Aorta (tissue), 5 donors: ENCODE measurements at regions of chr14 and their contacts with region 1.

Region 1: DNA sequence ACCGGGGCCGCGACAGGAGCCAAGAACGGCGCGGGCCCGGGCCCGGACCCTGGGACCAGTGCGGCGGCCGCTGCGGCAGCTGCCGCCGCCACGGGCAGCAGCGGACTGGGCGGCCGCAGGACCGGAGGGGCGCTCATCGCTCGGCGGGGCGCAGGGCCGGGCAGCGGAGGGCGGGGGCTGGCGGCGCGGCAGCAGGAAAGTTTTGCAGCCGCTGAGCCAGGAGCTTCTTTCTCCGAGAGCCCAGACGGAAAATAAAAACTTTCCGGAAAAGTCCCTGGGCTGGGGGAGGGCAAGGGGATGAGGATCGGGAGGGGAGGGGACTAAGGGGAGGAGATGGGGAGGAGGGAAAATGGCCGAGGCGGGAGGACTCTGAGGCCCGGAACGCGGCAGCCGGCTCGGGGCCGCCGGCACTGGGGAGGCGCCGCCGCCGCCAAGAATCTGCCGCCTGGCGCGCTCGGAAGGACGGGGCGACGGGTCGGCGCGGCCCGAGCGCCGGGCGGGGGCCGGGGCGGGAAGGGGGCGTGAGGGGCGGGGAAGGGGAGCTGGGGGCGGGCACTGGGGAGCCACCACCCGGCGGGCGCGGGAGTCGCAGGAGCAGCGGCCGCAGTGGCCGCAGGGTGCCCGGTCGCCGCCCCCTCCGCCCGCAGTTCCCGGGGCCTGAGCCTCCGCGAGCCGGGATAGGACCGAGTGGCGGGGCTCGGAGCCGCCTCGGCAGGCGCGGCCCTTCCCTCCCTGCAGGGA is at the start of gene PRKD1:
- DNase-seq: peak; percentile 70 to 90
- ATAC-seq: peak; percentile 90
- H3K4me3 ChIP-seq: peak within 1 kb of the TSS; percentile 95 to 99
- H3K27ac ChIP-seq: peak within 1 kb of the TSS; percentile 85 to 94
- H3K4me1 ChIP-seq: peaks cover 5 to 6% of the 10 kb centered on the region in 2 donors
- H3K27me3 ChIP-seq: no peaks in the 10 kb centered on the region
- total RNA-seq, gene PRKD1: 24.8 to 27.9 TPM

Region 2: GRCh38 chr14:29724991-29725390 is 202.6 kb before region 1 on chr14:
- intact Hi-C with region 1: loop called in 1 of 2 experiments (anchors 10 kb)
- DNase-seq: no peak
- ATAC-seq: peak; percentile 19
- H3K4me3 ChIP-seq: no peak overlapping the region
- H3K27ac ChIP-seq: no peak overlapping the region
- H3K4me1 ChIP-seq: peaks cover 3 to 4% of the 10 kb centered on the region in 2 donors
- H3K27me3 ChIP-seq: no peaks in the 10 kb centered on the region

Region 3: GRCh38 chr14:29741909-29742401 is 185.6 kb before region 1 on chr14:
- intact Hi-C with region 1: loop called in 1 of 2 experiments (anchors 10 kb)
- DNase-seq: no peak
- ATAC-seq: peak; percentile 58
- H3K4me3 ChIP-seq: no peak overlapping the region
- H3K27ac ChIP-seq: no peak overlapping the region
- H3K4me1 ChIP-seq: peaks cover 2 to 5% of the 10 kb centered on the region in 2 donors
- H3K27me3 ChIP-seq: no peaks in the 10 kb centered on the region

Region 4: DNA sequence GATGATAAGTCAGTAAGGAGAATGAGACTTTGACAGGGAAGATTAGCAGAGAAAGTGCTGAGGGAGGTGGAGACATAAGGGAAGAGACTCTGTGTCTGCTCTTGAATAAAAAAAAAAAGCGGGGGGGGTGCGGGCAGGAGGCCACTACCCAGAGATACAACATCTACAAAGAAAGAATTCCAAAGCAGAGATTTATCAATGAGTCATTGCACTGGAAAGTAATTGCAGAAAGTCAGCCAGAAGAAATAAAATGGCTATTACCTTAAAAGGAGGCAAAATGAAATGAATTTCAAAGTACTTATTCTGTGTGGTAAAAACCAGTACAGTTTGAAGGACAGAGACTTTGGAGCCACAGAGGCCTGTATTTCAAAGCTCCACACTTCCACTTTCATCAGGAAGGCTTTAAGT is 267.2 kb after region 1 on chr14:
- intact Hi-C with region 1: loop called (anchors 5 to 10 kb)
- DNase-seq: no peak
- ATAC-seq: peak; percentile 58
- H3K4me3 ChIP-seq: no peak overlapping the region
- H3K27ac ChIP-seq: peak overlapping the region in 1 of 2 donors; percentile 98
- H3K4me1 ChIP-seq: peaks cover 0 to 3% of the 10 kb centered on the region in 2 donors
- H3K27me3 ChIP-seq: no peaks in the 10 kb centered on the region